CD8-positive, alpha-beta memory T cell (primary cell): ENCODE measurements at regions of chr4 and their contacts with region 1.

Region 1: GRCh38 chr4:83110223-83110945 is 4.1 kb downstream of the PLAC8 start:
- DNase-seq: peak; percentile 79 to 90 (median 83)
- H3K4me3 ChIP-seq: peak overlapping the region; percentile 79
- H3K4me3 Mint-ChIP-seq: peak overlapping the region; percentile 95 to 98 (median 96)
- H3K27ac ChIP-seq: peak overlapping the region; percentile 58
- H3K27ac Mint-ChIP-seq: peak overlapping the region; percentile 92 to 98 (median 96)
- H3K4me1 ChIP-seq: peaks cover 45% of the 10 kb centered on the region
- H3K4me1 Mint-ChIP-seq: peaks cover 44 to 76% (median 75%) of the 10 kb centered on the region in 3 donors
- H3K27me3 ChIP-seq: no peaks in the 10 kb centered on the region
- H3K27me3 Mint-ChIP-seq: peaks cover 0 to 6% of the 10 kb centered on the region in 2 donors

Region 2: GRCh38 chr4:83074086-83074704 is 36.2 kb before region 1 on chr4:
- CTCF ChIA-PET with region 1: interaction called, 11 read pairs
- POLR2A ChIA-PET with region 1: interaction called, 3 read pairs
- DNase-seq: peak; percentile 10 to 88 (median 71)
- H3K4me3 ChIP-seq: no peak overlapping the region
- H3K4me3 Mint-ChIP-seq: peak overlapping the region; percentile 19 to 82 (median 75)
- H3K27ac ChIP-seq: no peak overlapping the region
- H3K27ac Mint-ChIP-seq: peak overlapping the region in 7 of 8 donors; percentile 38 to 72 (median 66)
- H3K4me1 ChIP-seq: no peaks in the 10 kb centered on the region
- H3K4me1 Mint-ChIP-seq: peaks cover 6 to 16% (median 12%) of the 10 kb centered on the region in 3 donors
- H3K27me3 ChIP-seq: no peaks in the 10 kb centered on the region
- H3K27me3 Mint-ChIP-seq: no peaks in the 10 kb centered on the region

Region 3: DNA sequence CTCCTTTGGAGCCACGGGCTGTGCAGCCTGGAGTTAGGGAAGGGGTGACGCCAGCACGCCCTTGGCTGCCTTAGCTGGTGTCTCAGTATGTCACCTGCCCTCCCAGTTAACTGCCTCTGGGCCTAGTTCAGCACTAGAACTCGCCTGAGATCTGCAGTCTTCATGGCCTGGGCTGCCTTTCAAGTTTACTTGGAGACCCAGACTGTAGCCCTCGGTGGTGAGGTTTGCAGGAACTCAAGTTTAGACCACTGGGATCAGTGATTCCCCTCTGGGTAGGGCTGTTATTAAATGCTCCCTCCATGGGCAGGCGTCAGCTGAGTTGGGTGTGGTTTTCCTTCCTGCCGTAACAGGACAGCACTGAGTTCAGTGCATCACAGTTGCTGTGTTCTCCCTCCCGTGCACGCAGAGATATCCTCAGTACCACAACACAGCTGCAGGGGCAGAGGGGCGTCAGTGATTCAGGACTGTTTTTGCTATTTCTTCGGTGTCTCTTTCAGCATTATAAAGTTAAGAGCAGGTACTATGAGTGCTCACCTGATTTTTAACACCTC is 26.4 kb before region 1 on chr4:
- CTCF ChIA-PET with region 1: interaction called, 24 read pairs
- POLR2A ChIA-PET with region 1: interaction called, 6 read pairs
- DNase-seq: peak; percentile 26 to 82 (median 64)
- H3K4me3 ChIP-seq: peak overlapping the region; percentile 1
- H3K4me3 Mint-ChIP-seq: peak overlapping the region; percentile 17 to 73 (median 57)
- H3K27ac ChIP-seq: no peak overlapping the region
- H3K27ac Mint-ChIP-seq: peak overlapping the region; percentile 82 to 97 (median 90)
- H3K4me1 ChIP-seq: peaks cover 27% of the 10 kb centered on the region
- H3K4me1 Mint-ChIP-seq: peaks cover 36 to 44% (median 40%) of the 10 kb centered on the region in 3 donors
- H3K27me3 ChIP-seq: no peaks in the 10 kb centered on the region
- H3K27me3 Mint-ChIP-seq: no peaks in the 10 kb centered on the region

Region 4: DNA sequence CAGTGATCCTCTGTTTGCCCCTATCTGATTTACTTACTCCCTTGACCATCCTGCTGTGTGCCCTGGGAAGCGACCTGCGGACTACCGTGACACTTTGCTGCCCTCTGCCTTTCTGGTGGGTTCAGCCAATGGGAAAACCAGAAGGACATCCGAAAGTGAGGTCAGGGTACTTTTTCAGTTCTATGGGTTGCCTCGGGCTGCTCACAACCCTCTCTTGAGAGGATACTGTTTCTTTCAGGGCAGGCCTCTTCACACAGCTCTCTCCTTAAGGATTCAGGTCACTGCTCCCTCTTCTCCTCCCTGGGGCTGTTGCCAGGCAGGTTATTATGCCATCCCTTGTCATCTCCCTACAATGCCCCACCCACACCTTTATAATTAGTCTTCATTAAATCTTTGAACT is 17.3 kb before region 1 on chr4:
- CTCF ChIA-PET with region 1: interaction called, 49 read pairs
- POLR2A ChIA-PET with region 1: interaction called, 4 read pairs
- DNase-seq: no peak
- H3K4me3 ChIP-seq: no peak overlapping the region
- H3K4me3 Mint-ChIP-seq: no peak overlapping the region
- H3K27ac ChIP-seq: no peak overlapping the region
- H3K27ac Mint-ChIP-seq: peak overlapping the region in 7 of 8 donors; percentile 25 to 94 (median 54)
- H3K4me1 ChIP-seq: peaks cover 15% of the 10 kb centered on the region
- H3K4me1 Mint-ChIP-seq: peaks cover 46 to 54% (median 53%) of the 10 kb centered on the region in 3 donors
- H3K27me3 ChIP-seq: no peaks in the 10 kb centered on the region
- H3K27me3 Mint-ChIP-seq: no peaks in the 10 kb centered on the region

Region 5: DNA sequence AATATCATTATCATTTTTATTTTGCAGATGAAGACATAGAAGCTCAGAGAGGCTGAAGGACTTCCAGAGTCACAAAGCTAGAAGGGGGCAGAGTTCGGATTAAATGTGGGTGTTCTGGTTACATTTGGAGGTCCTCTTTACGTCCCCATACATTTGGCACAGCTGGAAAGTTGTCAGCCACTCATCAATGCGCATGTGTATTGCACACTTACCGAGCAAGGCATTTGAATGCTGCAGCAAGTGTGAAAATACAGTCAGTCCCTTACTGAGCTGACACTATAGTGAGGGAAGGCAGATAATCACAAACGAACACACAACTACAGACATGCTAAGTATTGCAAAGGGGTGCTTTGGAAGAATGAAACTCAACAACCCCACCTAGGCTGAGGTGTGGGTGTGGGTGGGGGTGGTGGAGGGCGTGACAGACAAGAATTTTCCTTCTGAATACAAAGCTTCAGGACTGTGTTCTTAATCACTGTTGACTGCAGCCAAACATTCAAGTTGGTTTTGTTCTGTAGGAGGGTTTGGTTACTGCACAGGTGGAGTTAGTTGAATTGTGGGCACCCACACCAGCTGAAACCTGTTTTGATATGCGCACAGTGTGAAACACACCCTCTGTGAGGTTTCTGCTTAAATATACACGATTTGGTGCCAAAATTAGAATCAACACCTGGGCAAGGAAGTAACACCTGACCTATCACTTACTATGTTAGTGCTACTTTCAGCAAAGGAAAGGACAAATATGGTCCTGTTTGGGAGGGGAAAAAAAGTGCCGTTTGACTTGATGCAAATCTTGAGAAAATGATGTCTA is 101.9 kb after region 1 on chr4:
- CTCF ChIA-PET with region 1: interaction called, 28 read pairs
- POLR2A ChIA-PET with region 1: interaction called, 13 read pairs
- DNase-seq: peak; percentile 50 to 91 (median 86)
- H3K4me3 ChIP-seq: peak overlapping the region; percentile 21
- H3K4me3 Mint-ChIP-seq: peak overlapping the region; percentile 6 to 77 (median 71)
- H3K27ac ChIP-seq: peak overlapping the region; percentile 38
- H3K27ac Mint-ChIP-seq: peak overlapping the region in 7 of 8 donors; percentile 24 to 95 (median 89)
- H3K4me1 ChIP-seq: peaks cover 79% of the 10 kb centered on the region
- H3K4me1 Mint-ChIP-seq: peaks cover 75 to 87% (median 80%) of the 10 kb centered on the region in 3 donors
- H3K27me3 ChIP-seq: no peaks in the 10 kb centered on the region
- H3K27me3 Mint-ChIP-seq: peaks cover 0 to 1% of the 10 kb centered on the region in 2 donors

Region 6: DNA sequence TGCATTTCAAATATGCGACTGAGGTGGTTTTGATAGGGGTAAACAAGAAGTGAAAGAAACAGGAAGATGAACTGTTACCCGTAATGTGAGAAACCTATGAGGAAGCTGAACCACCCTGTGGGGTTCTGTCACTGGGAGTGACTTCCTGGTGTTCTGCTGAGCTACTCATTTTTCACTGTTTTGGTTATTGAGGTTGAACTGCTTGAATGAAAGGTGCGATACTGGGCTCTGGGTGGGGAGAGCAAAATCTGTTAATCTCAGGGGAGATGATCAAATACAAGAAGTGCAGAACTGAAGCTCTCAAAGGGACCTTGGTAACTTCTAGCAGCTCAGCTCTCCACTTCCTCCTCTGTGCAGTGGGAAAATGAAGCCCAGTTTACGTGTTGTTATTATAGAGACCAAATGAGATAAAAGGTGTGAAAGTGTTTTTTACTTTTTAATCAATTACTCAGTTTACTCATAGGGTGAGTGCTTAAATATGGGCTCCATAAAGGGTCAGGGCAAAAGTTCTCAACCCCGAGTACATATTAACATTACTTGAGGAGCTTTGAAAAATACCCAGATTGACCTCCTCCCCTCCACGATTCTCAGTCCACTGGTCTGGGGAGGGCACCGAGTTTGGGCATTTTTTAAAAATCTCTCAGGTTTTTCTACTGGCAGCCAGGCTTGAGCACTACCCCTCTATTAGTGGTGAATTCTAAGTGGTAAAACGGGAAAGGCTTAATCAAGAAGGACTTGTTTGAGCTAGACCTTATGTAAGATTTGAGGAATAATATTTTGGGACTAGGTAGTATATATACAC is 107.5 kb after region 1 on chr4:
- CTCF ChIA-PET with region 1: interaction called, 28 read pairs
- POLR2A ChIA-PET with region 1: interaction called, 13 read pairs
- DNase-seq: peak; percentile 37 to 89 (median 84)
- H3K4me3 ChIP-seq: peak overlapping the region; percentile 36
- H3K4me3 Mint-ChIP-seq: peak overlapping the region; percentile 25 to 88 (median 75)
- H3K27ac ChIP-seq: peak overlapping the region; percentile 12
- H3K27ac Mint-ChIP-seq: peak overlapping the region; percentile 64 to 95 (median 82)
- H3K4me1 ChIP-seq: peaks cover 72% of the 10 kb centered on the region
- H3K4me1 Mint-ChIP-seq: peaks cover 72 to 85% (median 81%) of the 10 kb centered on the region in 3 donors
- H3K27me3 ChIP-seq: no peaks in the 10 kb centered on the region
- H3K27me3 Mint-ChIP-seq: peaks cover 0 to 2% of the 10 kb centered on the region in 2 donors

Region 7: GRCh38 chr4:83252782-83253405 is 142.5 kb after region 1 on chr4:
- CTCF ChIA-PET with region 1: interaction called, 57 read pairs
- POLR2A ChIA-PET with region 1: interaction called, 3 read pairs
- DNase-seq: peak; percentile 56 to 78 (median 75)
- H3K4me3 ChIP-seq: no peak overlapping the region
- H3K4me3 Mint-ChIP-seq: peak overlapping the region in 4 of 7 donors; percentile 23 to 79 (median 36)
- H3K27ac ChIP-seq: no peak overlapping the region
- H3K27ac Mint-ChIP-seq: peak overlapping the region in 7 of 8 donors; percentile 42 to 85 (median 68)
- H3K4me1 ChIP-seq: peaks cover 13% of the 10 kb centered on the region
- H3K4me1 Mint-ChIP-seq: peaks cover 21 to 27% (median 24%) of the 10 kb centered on the region in 3 donors
- H3K27me3 ChIP-seq: no peaks in the 10 kb centered on the region
- H3K27me3 Mint-ChIP-seq: no peaks in the 10 kb centered on the region